ENCODE measurements at regions of chr9 and their contacts with region 1.

Region 1: DNA sequence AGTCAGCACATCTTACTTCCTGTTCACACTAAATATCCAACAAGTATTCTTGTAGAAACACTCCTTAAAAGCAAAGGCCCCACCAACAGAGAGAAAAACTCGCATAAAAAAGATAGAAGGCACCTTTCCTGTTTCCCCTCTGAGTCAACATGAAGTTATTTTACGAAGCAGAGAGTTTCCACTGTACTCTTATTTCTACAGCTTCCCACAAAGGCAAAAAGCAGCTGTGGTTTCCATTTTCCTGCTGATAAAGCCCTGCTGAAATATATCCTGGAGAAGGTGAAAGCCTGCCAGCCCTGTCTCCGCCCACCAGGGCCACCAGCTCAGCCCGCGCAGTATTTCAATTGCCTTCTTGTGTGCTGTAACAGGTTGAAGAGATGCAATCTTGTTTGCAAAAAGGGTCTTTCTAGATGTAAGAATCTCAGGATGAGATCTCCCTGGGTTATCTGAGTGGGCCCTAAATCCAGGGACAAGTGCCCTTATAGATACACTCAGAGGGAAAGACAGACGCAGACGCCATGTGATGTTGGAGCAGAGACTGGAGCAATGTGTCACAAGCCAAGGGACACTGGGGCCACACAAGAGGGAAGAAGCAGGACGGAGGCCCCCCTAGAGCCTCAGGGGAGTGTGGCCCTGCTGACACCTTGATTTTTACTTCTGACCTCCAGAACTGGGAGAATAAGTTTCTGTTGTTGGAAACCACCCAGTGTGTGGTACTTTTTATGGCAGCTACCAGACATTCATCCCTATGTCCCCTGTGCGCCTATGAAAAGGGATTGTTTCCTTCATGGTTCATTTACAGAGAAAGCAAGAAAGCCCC is 19.9 kb downstream of the SEMA4D start:
- DNase-seq: peak in 8 of 10 donors; percentile 33 to 82 (median 52)
- ATAC-seq: peak; percentile 54 to 64
- H3K4me3 Mint-ChIP-seq: peak overlapping the region; percentile 81 to 97 (median 92)
- H3K27ac Mint-ChIP-seq: peak overlapping the region; percentile 89 to 99 (median 96)
- H3K4me1 Mint-ChIP-seq: peaks cover 59 to 96% (median 91%) of the 10 kb centered on the region in 4 donors
- H3K27me3 Mint-ChIP-seq: no peaks in the 10 kb centered on the region

Region 2: DNA sequence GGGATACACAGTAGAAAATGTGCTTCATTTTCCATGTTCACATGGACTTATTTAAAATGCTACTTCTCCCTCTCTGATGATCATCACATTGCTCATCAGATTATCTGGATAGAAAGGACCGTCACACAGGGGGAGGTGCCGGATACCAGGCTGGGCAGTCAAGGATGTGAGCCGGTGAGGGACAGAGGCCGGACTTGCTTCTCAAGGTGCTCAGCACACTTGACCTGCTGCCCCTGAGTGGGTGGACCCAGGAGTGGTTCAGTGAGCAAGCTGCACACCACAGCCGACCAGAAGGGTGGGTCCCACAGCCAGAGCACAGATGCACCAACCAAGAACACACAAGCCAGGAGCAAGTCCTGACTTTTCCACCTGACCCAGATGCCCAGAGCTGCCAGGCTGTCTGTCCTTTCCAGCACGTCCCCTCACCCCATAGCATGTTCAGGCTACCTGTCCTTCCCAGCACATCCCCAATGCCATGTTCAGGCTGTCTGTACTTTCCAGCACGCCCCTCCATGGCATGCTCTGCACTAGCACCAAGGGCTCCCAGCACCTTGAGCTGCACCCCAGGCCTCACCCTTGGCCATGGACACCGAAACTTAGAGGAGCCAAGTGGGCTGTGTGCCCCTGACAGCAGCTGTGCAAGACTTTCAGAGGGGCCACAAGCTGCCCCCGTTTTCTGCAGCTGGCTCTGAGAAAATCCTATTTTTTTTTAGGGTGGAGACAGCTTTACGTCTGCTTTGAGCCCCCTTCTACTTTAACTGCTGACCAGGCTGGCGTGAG is 81.9 kb before region 1 on chr9:
- POLR2A ChIA-PET with region 1: no interaction called
- DNase-seq: no peak
- ATAC-seq: no peak
- H3K4me3 Mint-ChIP-seq: no peak overlapping the region
- H3K27ac Mint-ChIP-seq: peak overlapping the region in 6 of 10 donors; percentile 31 to 59 (median 42)
- H3K4me1 Mint-ChIP-seq: peaks cover 7 to 20% (median 14%) of the 10 kb centered on the region in 4 donors
- H3K27me3 Mint-ChIP-seq: no peaks in the 10 kb centered on the region

Region 3: DNA sequence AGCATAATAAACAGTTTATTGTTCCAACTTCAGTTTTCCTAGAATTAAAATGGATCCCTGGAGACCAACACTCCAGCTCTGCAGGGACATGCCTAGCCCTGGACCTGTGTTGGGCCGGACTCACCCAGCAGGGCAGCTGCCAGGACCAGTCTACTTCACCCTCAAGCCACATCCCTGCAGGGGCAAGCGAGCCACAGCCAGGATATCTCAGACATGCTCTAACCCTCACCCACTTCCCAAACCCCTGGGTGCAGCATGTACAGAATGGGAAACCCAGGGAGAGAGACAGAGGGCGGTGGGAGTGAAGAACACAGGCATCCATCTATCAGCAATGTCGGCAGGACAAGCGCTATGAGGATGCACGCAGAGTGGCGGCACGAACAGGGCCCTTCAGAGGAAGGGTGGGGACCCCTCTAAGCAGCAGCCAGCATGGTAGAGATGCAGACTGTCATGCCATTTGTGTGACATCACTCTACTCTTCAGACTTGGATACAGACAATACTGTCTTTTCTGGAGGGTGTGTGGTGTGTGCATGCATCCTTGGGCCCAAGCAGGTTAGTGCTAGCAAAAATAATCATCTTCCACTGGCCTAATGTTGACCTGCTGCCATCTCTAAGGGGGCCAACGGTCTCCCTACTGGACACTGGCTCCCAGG is 63.2 kb before region 1 on chr9:
- POLR2A ChIA-PET with region 1: no interaction called
- DNase-seq: no peak
- ATAC-seq: no peak
- H3K4me3 Mint-ChIP-seq: no peak overlapping the region
- H3K27ac Mint-ChIP-seq: peak overlapping the region in 6 of 10 donors; percentile 4 to 67 (median 48)
- H3K4me1 Mint-ChIP-seq: peaks cover 46 to 93% (median 84%) of the 10 kb centered on the region in 4 donors
- H3K27me3 Mint-ChIP-seq: no peaks in the 10 kb centered on the region

Region 4: GRCh38 chr9:89442981-89443814 is 34.8 kb before region 1 on chr9:
- POLR2A ChIA-PET with region 1: interaction called, 14 read pairs
- DNase-seq: no peak
- ATAC-seq: no peak
- H3K4me3 Mint-ChIP-seq: peak overlapping the region in 3 of 10 donors; percentile 51 to 71 (median 55)
- H3K27ac Mint-ChIP-seq: peak overlapping the region; percentile 94 to 99 (median 98)
- H3K4me1 Mint-ChIP-seq: peaks cover 45 to 95% (median 89%) of the 10 kb centered on the region in 4 donors
- H3K27me3 Mint-ChIP-seq: no peaks in the 10 kb centered on the region

Region 5: GRCh38 chr9:89455356-89455824 is 22.6 kb before region 1 on chr9:
- POLR2A ChIA-PET with region 1: interaction called, 27 read pairs
- DNase-seq: peak in 4 of 10 donors; percentile 55 to 66 (median 63)
- ATAC-seq: peak; percentile 48 to 66
- H3K4me3 Mint-ChIP-seq: peak overlapping the region; percentile 72 to 93 (median 82)
- H3K27ac Mint-ChIP-seq: peak overlapping the region; percentile 95 to 99 (median 97)
- H3K4me1 Mint-ChIP-seq: peaks cover 56 to 99% (median 97%) of the 10 kb centered on the region in 4 donors
- H3K27me3 Mint-ChIP-seq: no peaks in the 10 kb centered on the region

Region 6: GRCh38 chr9:89489548-89490530 is 11.8 kb after region 1 on chr9:
- POLR2A ChIA-PET with region 1: interaction called, 62 read pairs
- DNase-seq: peak in 4 of 10 donors; percentile 60 to 82 (median 78)
- ATAC-seq: peak; percentile 65 to 90
- H3K4me3 Mint-ChIP-seq: peak overlapping the region; percentile 49 to 99 (median 86)
- H3K27ac Mint-ChIP-seq: peak overlapping the region; percentile 26 to 97 (median 94)
- H3K4me1 Mint-ChIP-seq: peaks cover 60 to 97% (median 95%) of the 10 kb centered on the region in 4 donors
- H3K27me3 Mint-ChIP-seq: no peaks in the 10 kb centered on the region

Region 7: DNA sequence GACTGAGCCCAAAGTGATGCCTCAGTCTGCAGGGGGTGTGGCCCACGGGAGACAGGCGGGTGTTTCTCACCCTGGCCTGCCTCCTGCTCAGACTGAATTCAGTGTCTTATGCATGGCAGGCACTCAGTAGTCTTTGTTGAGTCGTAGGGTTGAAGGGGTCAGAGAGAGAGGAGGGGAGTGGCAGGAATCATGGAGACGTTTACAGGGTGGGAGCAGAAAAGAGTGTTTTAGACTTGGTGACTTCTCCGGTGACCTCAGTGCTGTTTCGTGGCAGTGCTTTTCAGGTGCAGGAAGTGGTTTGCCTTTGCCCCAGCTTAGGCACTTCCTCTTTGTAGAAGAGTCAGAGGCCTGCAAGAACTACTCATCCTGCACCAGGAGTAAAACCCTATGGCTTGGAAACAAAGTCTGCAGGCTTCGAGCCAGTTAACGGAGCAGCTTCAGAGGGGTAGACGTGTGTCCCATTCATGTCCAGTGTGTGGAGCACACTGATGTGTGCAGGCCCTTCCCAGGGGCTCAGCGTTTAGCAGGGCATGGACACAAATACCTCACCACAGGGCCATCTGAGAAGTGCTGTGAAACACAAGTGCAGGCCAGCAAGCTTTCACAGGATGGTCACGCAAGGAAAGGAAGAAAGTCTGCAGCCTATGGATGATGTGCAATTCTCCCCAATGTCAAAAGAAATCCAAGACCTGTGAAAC is 44.4 kb after region 1 on chr9:
- POLR2A ChIA-PET with region 1: interaction called, 18 read pairs
- DNase-seq: peak; percentile 41 to 90 (median 81)
- ATAC-seq: peak; percentile 84 to 89
- H3K4me3 Mint-ChIP-seq: peak overlapping the region; percentile 49 to 87 (median 75)
- H3K27ac Mint-ChIP-seq: peak overlapping the region; percentile 87 to 98 (median 96)
- H3K4me1 Mint-ChIP-seq: peaks cover 56 to 99% (median 94%) of the 10 kb centered on the region in 4 donors
- H3K27me3 Mint-ChIP-seq: no peaks in the 10 kb centered on the region

Region 8: DNA sequence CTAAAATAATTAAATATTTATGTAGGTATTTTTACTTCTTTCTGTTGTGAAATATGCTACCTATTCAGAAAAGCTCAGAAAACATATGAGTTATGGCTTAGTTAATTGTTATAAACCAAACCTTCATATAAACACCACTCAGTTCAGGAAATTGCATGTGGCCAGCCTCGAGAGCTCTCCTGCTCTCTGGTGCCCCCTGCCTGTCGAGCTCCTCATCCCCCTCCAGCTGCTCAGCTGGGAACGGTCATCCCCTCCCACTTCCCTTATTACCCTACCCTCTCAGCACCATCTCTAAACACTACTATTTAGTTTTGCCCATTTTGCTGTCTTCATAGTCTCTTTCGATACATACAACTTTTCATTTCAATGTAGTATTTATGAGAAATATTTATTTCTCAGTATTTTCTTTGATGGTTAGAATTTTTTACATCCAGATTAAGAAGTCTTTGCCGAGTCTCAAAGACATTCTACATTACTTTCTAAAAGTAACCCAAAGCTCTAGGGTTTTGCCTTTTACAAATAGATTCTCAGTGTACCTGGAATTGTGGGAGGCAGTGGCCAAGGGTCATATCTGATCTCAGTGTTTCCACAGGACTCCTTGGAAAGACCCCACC is 71.1 kb after region 1 on chr9:
- POLR2A ChIA-PET with region 1: interaction called, 26 read pairs
- DNase-seq: peak; percentile 72 to 90 (median 84)
- ATAC-seq: peak; percentile 99 to 100
- H3K4me3 Mint-ChIP-seq: peak overlapping the region in 3 of 10 donors; percentile 5 to 45 (median 38)
- H3K27ac Mint-ChIP-seq: peak overlapping the region in 8 of 10 donors; percentile 12 to 84 (median 74)
- H3K4me1 Mint-ChIP-seq: peaks cover 9 to 32% (median 28%) of the 10 kb centered on the region in 4 donors
- H3K27me3 Mint-ChIP-seq: no peaks in the 10 kb centered on the region